Posterior cingulate gyrus (tissue), 11 donors: ENCODE measurements at regions of chr20 and their contacts with region 1.

Region 1: DNA sequence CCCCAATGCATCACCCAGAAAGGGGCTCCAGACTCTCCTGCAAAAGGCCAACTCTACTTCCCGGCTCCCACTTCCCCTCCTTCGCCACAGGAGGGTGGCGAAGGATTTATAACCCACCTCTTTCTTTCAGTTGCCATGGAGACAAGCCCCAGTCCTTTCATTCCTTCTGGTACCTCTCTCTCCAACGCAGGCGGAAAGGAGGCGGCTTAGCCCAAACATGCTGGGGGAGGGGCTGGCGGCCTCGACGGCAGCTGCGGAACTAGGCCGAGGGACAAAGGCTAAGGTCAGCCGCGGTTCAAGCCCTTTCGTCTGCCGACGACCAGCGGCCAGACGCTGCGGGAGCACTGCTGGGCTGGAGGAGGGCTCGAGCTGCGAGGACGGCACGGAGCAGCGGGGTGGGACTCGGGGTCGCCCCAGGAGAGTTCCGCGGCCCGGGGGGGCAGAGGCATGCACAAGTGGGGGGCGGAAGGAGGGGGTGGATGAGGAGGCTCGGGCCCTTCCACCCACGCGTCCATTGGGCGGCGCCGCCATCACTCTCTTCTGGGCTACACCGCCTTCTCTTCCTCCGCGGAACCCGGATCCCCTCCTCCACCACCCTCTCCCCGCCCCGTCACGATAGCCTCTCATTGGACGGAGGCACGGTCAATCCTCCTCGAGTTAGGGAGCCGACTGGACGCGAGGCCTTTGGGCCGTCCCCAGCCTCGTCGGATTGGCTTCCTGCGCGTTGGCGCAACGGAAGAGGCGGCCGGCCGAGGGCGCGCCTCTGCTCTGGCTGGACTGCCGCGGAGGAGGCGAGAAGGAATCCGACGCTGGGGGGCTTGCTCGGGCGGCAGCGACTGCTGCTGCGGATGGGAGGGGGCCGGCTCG is at the start of gene PANK2:
- DNase-seq: peak; percentile 98 to 100 (median 99)

Region 2: GRCh38 chr20:3932681-3933080 is 43.8 kb after region 1 on chr20:
- intact Hi-C with region 1: loop called (anchors 5 kb)
- DNase-seq: no peak

Region 3: DNA sequence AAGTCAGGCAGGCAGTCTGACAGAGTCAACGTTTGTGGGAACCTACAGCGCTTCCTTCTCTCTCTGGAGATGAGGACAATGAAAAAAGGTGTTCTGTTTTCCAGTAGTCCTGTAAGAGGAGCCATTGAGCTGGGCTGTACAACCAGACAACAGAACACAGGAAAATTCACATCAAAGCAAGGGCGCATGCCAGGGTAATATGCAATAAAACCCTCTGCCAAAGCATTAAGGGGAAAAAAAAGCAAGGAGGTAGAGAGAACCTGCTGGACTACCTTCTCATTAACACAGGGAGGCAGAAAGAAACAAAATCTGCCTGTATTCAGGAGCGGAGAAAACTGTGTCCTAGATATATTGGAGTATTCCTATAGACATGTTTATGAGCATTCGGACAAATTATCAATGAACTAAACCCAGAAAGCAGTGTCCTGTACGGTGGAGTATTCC is 125.2 kb after region 1 on chr20:
- intact Hi-C with region 1: loop called (anchors 1 kb)
- DNase-seq: peak in 1 of 10 donors; percentile 30